Uterus (tissue), 4 donors: ENCODE measurements at regions of chr11 and their contacts with region 1.

Region 1: GRCh38 chr11:12893787-12894672 is 115.1 kb upstream of the RASSF10 start:
- DNase-seq: peak; percentile 68 to 70
- H3K4me3 ChIP-seq: no peak overlapping the region
- H3K27ac ChIP-seq: peak overlapping the region; percentile 50 to 57
- H3K4me1 ChIP-seq: no peaks in the 10 kb centered on the region
- H3K27me3 ChIP-seq: no peaks in the 10 kb centered on the region
- CTCF ChIP-seq: peak; percentile 82 to 90 (median 83)
- POLR2A ChIP-seq: no peak

Region 2: DNA sequence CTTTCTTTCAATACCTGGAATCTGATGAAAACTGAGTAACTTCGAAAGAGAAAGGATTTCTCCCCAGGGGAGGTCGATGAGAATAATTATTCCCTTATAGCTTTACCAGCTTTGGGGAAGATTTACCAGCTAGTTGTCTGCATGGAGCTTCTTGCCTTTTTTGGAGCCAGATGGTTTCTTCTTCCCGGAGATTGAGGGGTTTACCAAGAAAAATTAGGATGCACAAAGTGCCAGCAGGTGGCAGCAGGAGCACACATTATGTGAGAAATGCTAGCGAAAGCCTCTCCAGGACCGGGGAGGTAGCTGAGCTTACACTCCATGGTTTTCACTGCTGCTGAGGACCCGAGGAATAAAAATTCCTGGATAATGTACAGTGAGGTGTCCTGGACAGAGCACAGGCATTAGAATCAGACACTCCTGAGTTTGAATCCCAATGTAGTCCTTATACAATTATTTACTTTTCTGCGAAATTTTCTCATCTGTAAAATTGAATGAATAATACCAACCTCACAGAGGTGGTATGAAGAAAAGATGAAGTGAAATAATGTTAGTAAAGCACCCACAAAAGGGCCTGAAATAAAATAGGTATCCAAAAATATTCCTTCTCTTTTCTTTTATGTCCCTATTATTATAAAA is 562.7 kb before region 1 on chr11:
- intact Hi-C with region 1: loop called (anchors 5 kb)
- DNase-seq: peak; percentile 89 to 92
- H3K4me3 ChIP-seq: no peak overlapping the region
- H3K27ac ChIP-seq: no peak overlapping the region
- H3K4me1 ChIP-seq: no peaks in the 10 kb centered on the region
- H3K27me3 ChIP-seq: no peaks in the 10 kb centered on the region
- CTCF ChIP-seq: peak; percentile 75 to 91 (median 84)
- POLR2A ChIP-seq: no peak